ENCODE measurements at regions of chr15 and their contacts with region 1.

Region 1: GRCh38 chr15:85667491-85668424 is 127.0 kb downstream of the KLHL25 start:
- DNase-seq: peak; percentile 94
- H3K4me3 ChIP-seq: no peak overlapping the region
- H3K27ac ChIP-seq: peak overlapping the region; percentile 96
- H3K4me1 ChIP-seq: peaks cover 16% of the 10 kb centered on the region
- H3K27me3 ChIP-seq: no peaks in the 10 kb centered on the region
- CTCF ChIP-seq: no peak

Region 2: GRCh38 chr15:85618956-85619491 is 48.7 kb before region 1 on chr15:
- CTCF ChIA-PET with region 1: no interaction called
- dilution Hi-C with region 1: no loop called
- in situ Hi-C with region 1: no loop called
- intact Hi-C with region 1: loop called (anchors 1 kb)
- DNase-seq: peak; percentile 98
- H3K4me3 ChIP-seq: peak overlapping the region; percentile 43 to 48 (median 44)
- H3K27ac ChIP-seq: peak overlapping the region; percentile 95
- H3K4me1 ChIP-seq: peaks cover 63% of the 10 kb centered on the region
- H3K27me3 ChIP-seq: no peaks in the 10 kb centered on the region
- CTCF ChIP-seq: no peak

Region 3: DNA sequence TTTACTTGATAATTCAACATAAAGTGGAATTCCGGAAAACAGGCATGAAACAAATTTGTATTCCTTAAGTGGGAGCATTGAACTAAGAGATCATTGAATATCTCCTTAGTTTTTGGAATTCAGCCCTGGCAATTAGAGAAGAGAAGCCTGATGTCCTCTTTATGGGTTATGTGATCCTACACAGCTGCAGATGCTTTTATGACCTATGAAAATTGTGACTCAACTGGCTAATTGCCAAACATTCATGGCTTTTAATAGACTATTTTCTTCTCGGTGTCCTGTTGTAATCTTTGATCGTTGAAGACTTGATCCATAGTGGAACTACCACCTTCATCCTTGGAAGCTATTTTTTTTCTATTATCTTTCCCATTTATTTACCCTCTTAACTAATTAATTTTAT is 458.0 kb after region 1 on chr15:
- CTCF ChIA-PET with region 1: no interaction called
- dilution Hi-C with region 1: no loop called
- in situ Hi-C with region 1: no loop called
- intact Hi-C with region 1: no loop called
- DNase-seq: no peak
- H3K4me3 ChIP-seq: no peak overlapping the region
- H3K27ac ChIP-seq: no peak overlapping the region
- H3K4me1 ChIP-seq: no peaks in the 10 kb centered on the region
- H3K27me3 ChIP-seq: no peaks in the 10 kb centered on the region
- CTCF ChIP-seq: no peak

Measured in mammary epithelial cell (primary cell).